Kidney (tissue), 22 donors: ENCODE measurements at regions of chr3 and their contacts with region 1.

Region 1: DNA sequence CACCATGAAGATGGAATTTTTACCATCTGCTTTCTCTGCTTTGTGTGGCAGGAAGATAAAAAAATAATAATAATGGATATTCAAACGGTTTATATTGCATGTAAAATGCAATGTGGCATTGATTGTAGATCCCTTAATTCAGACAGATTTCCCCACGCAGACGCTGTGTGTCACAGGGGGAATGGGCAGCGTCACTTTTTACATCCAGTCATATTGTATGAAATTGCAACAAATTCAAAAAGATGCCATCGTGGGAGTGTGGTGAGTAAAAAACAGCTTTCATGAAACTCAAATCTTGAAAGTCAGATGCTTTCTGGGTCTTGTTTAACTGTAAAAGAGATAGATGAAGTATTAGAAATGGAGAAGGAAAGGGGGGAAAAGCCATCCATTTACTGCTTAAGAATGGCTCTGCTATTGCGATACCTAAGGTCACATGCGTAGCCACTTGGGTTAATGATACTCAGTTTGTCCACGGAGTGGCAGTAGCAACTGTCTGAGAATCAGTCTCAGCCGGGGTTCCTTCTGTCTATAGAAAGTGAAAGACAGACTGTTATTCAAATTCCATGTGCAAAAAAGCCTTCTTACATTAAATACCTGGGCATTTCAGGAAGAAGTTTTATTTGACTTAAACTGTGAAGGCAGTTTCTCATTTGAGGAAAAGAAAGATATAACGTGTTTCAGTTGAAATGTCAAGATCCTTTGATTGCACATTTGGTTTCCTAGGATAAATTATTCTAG is 28.5 kb downstream of the BTD start:
- DNase-seq: peak in 3 of 5 donors; percentile 58 to 87 (median 85)
- H3K4me3 ChIP-seq: peak overlapping the region; percentile 32 to 57 (median 46)
- H3K27ac ChIP-seq: no peak overlapping the region
- H3K4me1 ChIP-seq: peaks cover 0 to 10% (median 5%) of the 10 kb centered on the region in 3 donors
- H3K27me3 ChIP-seq: no peaks in the 10 kb centered on the region
- CTCF ChIP-seq: peak; percentile 74

Region 2: DNA sequence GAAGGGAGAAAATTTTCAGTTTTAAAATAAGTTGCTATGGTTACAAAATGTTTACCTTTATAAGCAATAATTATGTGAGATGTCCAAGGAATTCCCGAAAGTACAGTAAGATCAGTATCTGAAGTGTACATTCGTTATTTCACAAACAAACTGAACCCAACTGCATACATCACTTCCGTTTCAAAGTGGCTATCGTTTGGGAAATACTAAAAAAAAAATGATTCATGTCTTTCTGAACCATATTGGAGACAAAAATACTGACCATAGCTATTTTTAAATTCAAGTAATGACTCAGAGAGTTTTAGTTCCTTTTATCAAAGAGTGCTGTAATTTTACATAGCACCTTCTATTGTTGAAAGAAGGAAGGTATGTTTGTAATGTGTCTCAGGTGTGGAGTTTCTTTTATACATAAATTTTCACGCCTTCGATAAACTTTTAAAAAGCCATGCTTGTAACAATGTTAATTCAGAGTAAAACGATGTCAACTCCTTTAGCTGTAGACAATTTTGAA is 175.8 kb after region 1 on chr3:
- intact Hi-C with region 1: loop called (anchors 10 kb)
- DNase-seq: peak in 1 of 5 donors; percentile 34
- H3K4me3 ChIP-seq: no peak overlapping the region
- H3K27ac ChIP-seq: no peak overlapping the region
- H3K4me1 ChIP-seq: peaks cover 0 to 4% (median 3%) of the 10 kb centered on the region in 3 donors
- H3K27me3 ChIP-seq: no peaks in the 10 kb centered on the region
- CTCF ChIP-seq: no peak